CD4-positive, alpha-beta T cell (primary cell): ENCODE measurements at regions of chr3 and their contacts with region 1.

Region 1: GRCh38 chr3:18431266-18431665 is 6.1 kb upstream of the SATB1 start:
- DNase-seq: no peak
- ATAC-seq: no peak
- H3K4me3 ChIP-seq: peak overlapping the region; percentile 23
- H3K4me3 Mint-ChIP-seq: peak overlapping the region; percentile 90
- H3K27ac ChIP-seq: peak overlapping the region; percentile 11 to 54
- H3K27ac Mint-ChIP-seq: peak overlapping the region; percentile 96
- H3K4me1 ChIP-seq: peaks cover 19% of the 10 kb centered on the region
- H3K4me1 Mint-ChIP-seq: peaks cover 87% of the 10 kb centered on the region
- H3K27me3 ChIP-seq: no peaks in the 10 kb centered on the region
- H3K27me3 Mint-ChIP-seq: no peaks in the 10 kb centered on the region
- CTCF ChIP-seq: no peak

Region 2: GRCh38 chr3:18369551-18370185 is 61.6 kb before region 1 on chr3:
- CTCF ChIA-PET with region 1: no interaction called
- POLR2A ChIA-PET with region 1: no interaction called
- intact Hi-C with region 1: no loop called
- DNase-seq: no peak
- ATAC-seq: no peak
- H3K4me3 ChIP-seq: no peak overlapping the region
- H3K4me3 Mint-ChIP-seq: peak overlapping the region; percentile 63
- H3K27ac ChIP-seq: no peak overlapping the region
- H3K27ac Mint-ChIP-seq: peak overlapping the region; percentile 93
- H3K4me1 ChIP-seq: peaks cover 15% of the 10 kb centered on the region
- H3K4me1 Mint-ChIP-seq: peaks cover 96% of the 10 kb centered on the region
- H3K27me3 ChIP-seq: no peaks in the 10 kb centered on the region
- H3K27me3 Mint-ChIP-seq: no peaks in the 10 kb centered on the region
- CTCF ChIP-seq: no peak

Region 3: GRCh38 chr3:18411541-18411940 is 19.7 kb before region 1 on chr3:
- CTCF ChIA-PET with region 1: interaction called, 3 read pairs
- POLR2A ChIA-PET with region 1: interaction called, 12 read pairs
- intact Hi-C with region 1: no loop called
- DNase-seq: peak in 3 of 14 experiments; percentile 43 to 62 (median 46)
- ATAC-seq: peak; percentile 72
- H3K4me3 ChIP-seq: no peak overlapping the region
- H3K4me3 Mint-ChIP-seq: peak overlapping the region; percentile 79
- H3K27ac ChIP-seq: peak overlapping the region in 1 of 2 donors; percentile 53
- H3K27ac Mint-ChIP-seq: peak overlapping the region; percentile 82
- H3K4me1 ChIP-seq: peaks cover 17% of the 10 kb centered on the region
- H3K4me1 Mint-ChIP-seq: peaks cover 89% of the 10 kb centered on the region
- H3K27me3 ChIP-seq: no peaks in the 10 kb centered on the region
- H3K27me3 Mint-ChIP-seq: no peaks in the 10 kb centered on the region
- CTCF ChIP-seq: no peak

Region 4: DNA sequence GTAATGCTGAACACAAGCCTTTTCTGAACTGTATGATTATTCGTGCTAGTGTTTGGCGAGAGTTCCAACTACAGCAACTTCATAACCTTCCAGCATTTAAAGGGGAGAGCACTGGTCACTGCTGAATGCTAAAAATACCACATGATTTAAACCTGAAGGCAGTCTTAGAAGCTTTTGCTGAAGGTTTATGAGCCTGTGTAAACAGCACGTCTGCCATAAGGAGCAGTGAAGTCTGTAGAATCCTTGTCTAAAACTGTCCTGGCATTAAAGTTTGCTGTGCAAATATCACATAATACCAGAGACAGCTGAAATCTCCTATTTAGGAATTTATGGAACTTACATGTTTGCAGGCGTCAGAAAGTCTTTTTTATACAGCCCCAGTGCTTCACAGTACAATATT is 12.0 kb before region 1 on chr3:
- CTCF ChIA-PET with region 1: interaction called, 3 read pairs
- POLR2A ChIA-PET with region 1: interaction called, 42 read pairs
- intact Hi-C with region 1: no loop called
- DNase-seq: no peak
- ATAC-seq: no peak
- H3K4me3 ChIP-seq: peak overlapping the region; percentile 10
- H3K4me3 Mint-ChIP-seq: peak overlapping the region; percentile 83
- H3K27ac ChIP-seq: peak overlapping the region in 1 of 2 donors; percentile 44
- H3K27ac Mint-ChIP-seq: peak overlapping the region; percentile 96
- H3K4me1 ChIP-seq: peaks cover 25% of the 10 kb centered on the region
- H3K4me1 Mint-ChIP-seq: peaks cover 96% of the 10 kb centered on the region
- H3K27me3 ChIP-seq: no peaks in the 10 kb centered on the region
- H3K27me3 Mint-ChIP-seq: no peaks in the 10 kb centered on the region
- CTCF ChIP-seq: no peak

Region 5: GRCh38 chr3:18679238-18679637 is 248.0 kb after region 1 on chr3:
- CTCF ChIA-PET with region 1: no interaction called
- POLR2A ChIA-PET with region 1: no interaction called
- intact Hi-C with region 1: no loop called
- DNase-seq: peak in 7 of 14 experiments; percentile 3 to 75 (median 39)
- ATAC-seq: peak; percentile 87
- H3K4me3 ChIP-seq: peak overlapping the region; percentile 12
- H3K4me3 Mint-ChIP-seq: peak overlapping the region; percentile 57
- H3K27ac ChIP-seq: peak overlapping the region in 1 of 2 donors; percentile 33
- H3K27ac Mint-ChIP-seq: peak overlapping the region; percentile 73
- H3K4me1 ChIP-seq: peaks cover 13% of the 10 kb centered on the region
- H3K4me1 Mint-ChIP-seq: peaks cover 75% of the 10 kb centered on the region
- H3K27me3 ChIP-seq: no peaks in the 10 kb centered on the region
- H3K27me3 Mint-ChIP-seq: no peaks in the 10 kb centered on the region
- CTCF ChIP-seq: no peak

Region 6: GRCh38 chr3:19527746-19528145 is 1096.5 kb after region 1 on chr3:
- CTCF ChIA-PET with region 1: no interaction called
- POLR2A ChIA-PET with region 1: no interaction called
- intact Hi-C with region 1: no loop called
- DNase-seq: no peak
- ATAC-seq: no peak
- H3K4me3 ChIP-seq: no peak overlapping the region
- H3K4me3 Mint-ChIP-seq: no peak overlapping the region
- H3K27ac ChIP-seq: no peak overlapping the region
- H3K27ac Mint-ChIP-seq: no peak overlapping the region
- H3K4me1 ChIP-seq: no peaks in the 10 kb centered on the region
- H3K4me1 Mint-ChIP-seq: no peaks in the 10 kb centered on the region
- H3K27me3 ChIP-seq: no peaks in the 10 kb centered on the region
- H3K27me3 Mint-ChIP-seq: no peaks in the 10 kb centered on the region
- CTCF ChIP-seq: no peak